Breast epithelium (tissue), 4 donors: ENCODE measurements at regions of chr17 and their contacts with region 1.

Region 1: DNA sequence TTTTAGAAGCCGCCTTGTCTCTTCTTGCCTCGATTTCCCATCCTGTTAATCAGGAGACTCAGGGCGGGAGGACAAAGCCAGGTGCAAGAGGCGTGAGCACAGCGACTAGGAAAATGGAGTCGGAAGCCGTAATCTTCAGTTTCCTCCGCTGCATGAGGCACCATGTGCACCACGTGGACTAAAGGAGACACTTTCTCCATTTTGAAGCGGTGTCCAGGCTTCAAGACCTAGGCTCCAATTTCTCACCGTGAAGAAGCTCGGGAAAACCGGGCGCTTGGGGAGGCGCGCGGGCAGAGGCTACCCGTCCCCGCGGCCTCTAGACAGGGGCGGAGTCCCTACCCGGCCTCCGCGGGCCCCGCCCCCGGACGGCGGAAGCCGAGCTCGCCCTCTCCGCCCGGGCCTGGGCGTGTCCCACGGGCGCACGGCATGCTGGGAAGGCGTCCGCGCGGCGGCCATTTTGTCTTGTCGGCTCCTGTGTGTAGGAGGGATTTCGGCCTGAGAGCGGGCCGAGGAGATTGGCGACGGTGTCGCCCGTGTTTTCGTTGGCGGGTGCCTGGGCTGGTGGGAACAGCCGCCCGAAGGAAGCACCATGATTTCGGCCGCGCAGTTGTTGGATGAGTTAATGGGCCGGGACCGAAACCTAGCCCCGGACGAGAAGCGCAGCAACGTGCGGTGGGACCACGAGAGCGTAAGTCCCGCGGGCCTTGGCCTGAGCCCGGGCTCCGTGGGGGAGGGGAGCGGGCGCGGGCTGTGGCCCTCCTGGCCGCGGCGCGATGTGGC is at the start of gene LUC7L3:
- DNase-seq: peak; percentile 92 to 94
- H3K4me3 ChIP-seq: peak within 1 kb of the TSS; percentile 77 to 89 (median 84)
- H3K27ac ChIP-seq: peak within 1 kb of the TSS; percentile 96 to 97
- H3K4me1 ChIP-seq: peaks cover 0 to 27% of the 10 kb centered on the region in 2 donors
- H3K27me3 ChIP-seq: no peaks in the 10 kb centered on the region
- CTCF ChIP-seq: no peak
- POLR2A ChIP-seq: peak; percentile 79
- total RNA-seq, gene LUC7L3: 70.7 to 161 (median 104) TPM

Region 2: DNA sequence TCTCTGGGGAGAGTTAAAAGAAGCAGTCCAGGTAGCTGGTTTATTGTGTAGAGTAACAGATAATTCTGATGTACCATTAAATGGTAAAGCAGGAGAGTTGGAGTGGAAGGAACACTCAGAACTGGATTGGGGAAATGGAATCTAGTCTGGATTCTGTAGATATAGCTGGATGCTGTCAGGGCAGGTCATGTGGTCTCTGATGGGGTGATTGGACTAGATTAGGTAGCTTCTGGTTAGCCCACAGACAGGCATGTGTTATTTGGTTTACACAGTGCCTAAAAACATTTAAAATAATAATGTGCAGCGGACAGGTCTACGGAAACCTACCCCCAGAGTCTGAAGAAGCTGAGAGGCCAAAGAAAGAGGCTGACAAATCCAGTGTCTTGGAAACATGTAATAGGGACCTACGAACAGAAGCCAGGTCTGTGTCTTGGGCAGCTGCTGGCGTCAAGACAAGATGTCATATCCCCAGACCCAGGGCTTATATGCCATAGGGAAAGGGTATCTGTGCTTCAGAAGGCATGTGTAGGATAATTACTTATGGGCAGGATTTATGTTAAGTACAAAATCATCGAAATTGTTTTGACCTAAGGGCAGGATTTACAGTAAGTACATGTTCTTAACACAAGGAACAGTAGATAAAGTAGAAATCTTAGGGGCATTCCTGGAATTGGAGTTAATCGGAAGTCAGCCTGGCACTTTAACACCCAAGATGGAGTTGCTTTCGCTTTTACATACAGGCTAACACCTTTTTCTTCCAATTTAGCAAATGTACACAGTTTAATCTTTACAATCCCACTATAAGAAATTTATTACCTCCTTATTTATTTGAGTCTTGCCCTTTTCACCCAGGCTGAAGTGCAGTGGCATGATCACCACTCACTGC is 12.5 kb after region 1 on chr17:
- intact Hi-C with region 1: loop called (anchors 1 kb)
- DNase-seq: no peak
- H3K4me3 ChIP-seq: no peak overlapping the region
- H3K27ac ChIP-seq: no peak overlapping the region
- H3K4me1 ChIP-seq: peaks cover 0 to 10% of the 10 kb centered on the region in 2 donors
- H3K27me3 ChIP-seq: no peaks in the 10 kb centered on the region
- CTCF ChIP-seq: no peak
- POLR2A ChIP-seq: no peak